IMR-90 (cell line): ENCODE measurements at regions of chr6 and their contacts with region 1.

Region 1: DNA sequence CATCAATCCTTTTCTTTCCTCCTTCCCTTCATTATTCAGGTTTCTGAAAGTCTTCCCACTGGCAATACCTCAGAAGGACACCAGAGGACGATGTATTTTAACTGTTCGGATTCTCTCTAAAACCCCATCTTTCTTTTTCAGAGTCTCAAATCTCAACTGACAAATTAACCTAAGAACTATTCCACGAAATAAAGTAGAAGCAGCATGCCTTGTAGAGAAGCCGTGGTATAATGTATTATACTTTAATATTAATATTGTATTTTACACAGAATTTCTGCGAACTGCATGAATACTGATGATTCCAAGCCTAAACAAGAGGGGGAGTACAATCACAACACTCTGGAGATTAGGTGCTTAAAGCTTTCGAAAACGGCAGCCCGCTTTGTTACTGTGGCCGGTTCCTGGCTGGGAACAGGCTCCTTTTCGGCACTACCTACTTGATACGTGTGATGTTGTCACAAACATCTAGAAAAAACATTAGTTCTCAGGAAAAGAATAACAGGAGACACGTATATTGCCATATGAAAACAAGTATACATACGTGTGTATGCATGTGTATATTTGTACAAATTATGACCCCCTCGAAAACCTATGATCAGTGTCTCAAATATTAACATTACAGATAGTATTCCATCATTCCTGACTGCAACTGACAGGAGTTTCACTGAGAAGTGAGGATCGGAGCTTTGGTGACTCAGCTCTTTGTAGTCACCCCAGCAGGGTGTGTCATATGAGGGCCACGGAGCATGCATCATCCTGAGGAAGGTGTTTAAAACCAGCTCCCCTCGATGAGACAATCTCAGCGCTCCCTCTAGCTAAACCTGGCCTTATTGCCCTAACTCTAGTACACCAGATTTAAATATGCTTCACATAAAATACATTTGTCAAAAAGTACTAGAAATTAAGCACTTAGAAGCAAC is 319.7 kb upstream of the TCF21 start:
- DNase-seq: peak; percentile 91
- ATAC-seq: peak; percentile 81
- H3K4me3 ChIP-seq: peak overlapping the region; percentile 29; the same call in 1 of the 2 replicates
- H3K27ac ChIP-seq: peak overlapping the region; percentile 96
- H3K4me1 ChIP-seq: peaks cover 16% of the 10 kb centered on the region
- H3K27me3 ChIP-seq: no peaks in the 10 kb centered on the region
- CTCF ChIP-seq: peak; percentile 97
- POLR2A ChIP-seq: peak; percentile 50; the same call in 1 of the 2 replicates
- RAD21 ChIP-seq: peak; percentile 96

Region 2: DNA sequence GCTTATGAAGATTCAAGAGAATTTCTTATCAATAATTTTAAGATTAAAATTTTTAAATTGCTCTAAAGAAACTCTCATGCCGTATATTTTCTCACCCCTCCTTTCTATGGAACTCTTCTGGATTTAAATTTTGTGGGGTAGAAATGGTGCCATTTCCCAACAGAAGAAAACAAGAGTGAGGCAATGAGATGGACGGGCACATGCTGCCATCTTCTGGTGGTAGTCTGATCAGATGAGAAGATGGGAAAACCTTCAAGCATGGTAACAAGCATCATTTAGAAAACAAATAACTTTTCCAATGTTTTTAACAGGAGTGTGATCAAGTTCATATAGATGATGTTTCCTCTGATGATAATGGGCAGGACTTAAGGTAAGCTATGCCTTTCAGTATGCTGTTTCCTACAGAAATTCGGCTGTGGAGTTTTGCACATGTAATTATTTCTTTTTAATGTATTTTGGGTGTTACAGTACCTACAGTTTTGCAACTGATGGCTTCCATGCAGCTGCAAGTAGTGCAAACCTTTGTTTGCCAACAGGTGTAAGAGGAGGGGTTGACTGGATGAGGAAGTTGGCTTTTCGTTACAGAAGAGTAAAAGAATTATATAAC is 56.7 kb before region 1 on chr6:
- CTCF ChIA-PET with region 1: no interaction called
- POLR2A ChIA-PET with region 1: no interaction called
- dilution Hi-C with region 1: no loop called
- in situ Hi-C with region 1: no loop called
- intact Hi-C with region 1: no loop called
- DNase-seq: peak; percentile 67
- ATAC-seq: peak; percentile 72
- H3K4me3 ChIP-seq: no peak overlapping the region
- H3K27ac ChIP-seq: no peak overlapping the region
- H3K4me1 ChIP-seq: no peaks in the 10 kb centered on the region
- H3K27me3 ChIP-seq: no peaks in the 10 kb centered on the region
- CTCF ChIP-seq: peak; percentile 81
- POLR2A ChIP-seq: peak; percentile 46; the same call in 1 of the 2 replicates
- RAD21 ChIP-seq: peak; percentile 92

Region 3: GRCh38 chr6:133587546-133588160 is 18.4 kb after region 1 on chr6:
- CTCF ChIA-PET with region 1: no interaction called
- POLR2A ChIA-PET with region 1: no interaction called
- dilution Hi-C with region 1: no loop called
- in situ Hi-C with region 1: no loop called
- intact Hi-C with region 1: no loop called
- DNase-seq: peak; percentile 87
- ATAC-seq: peak; percentile 87
- H3K4me3 ChIP-seq: no peak overlapping the region
- H3K27ac ChIP-seq: peak overlapping the region; percentile 99; the same call in 1 of the 2 replicates
- H3K4me1 ChIP-seq: peaks cover 15% of the 10 kb centered on the region
- H3K27me3 ChIP-seq: no peaks in the 10 kb centered on the region
- CTCF ChIP-seq: no peak
- POLR2A ChIP-seq: no peak
- RAD21 ChIP-seq: no peak

Region 4: DNA sequence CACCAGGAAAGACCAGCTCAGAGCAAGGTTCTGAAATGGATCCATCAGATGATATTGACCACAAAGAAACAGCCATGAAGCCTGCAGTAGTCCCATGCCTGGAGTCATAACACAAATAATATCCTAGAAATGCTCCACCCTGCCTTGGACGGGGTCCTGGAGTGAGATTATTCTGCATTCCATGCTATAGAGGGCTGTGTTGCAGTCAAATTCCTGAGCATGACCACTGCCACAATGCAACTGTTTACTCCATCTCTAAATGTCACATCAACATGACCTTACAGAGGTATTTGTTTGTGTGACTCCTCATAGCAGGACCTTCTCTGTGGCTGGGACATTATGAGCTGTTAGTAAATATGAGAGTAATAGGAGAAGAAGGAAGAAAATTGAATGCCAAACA is 62.2 kb after region 1 on chr6:
- CTCF ChIA-PET with region 1: interaction called, 4 read pairs
- POLR2A ChIA-PET with region 1: interaction called, 4 read pairs
- dilution Hi-C with region 1: no loop called
- in situ Hi-C with region 1: no loop called
- intact Hi-C with region 1: loop called (anchors 1 kb)
- DNase-seq: peak; percentile 73
- ATAC-seq: peak; percentile 87
- H3K4me3 ChIP-seq: no peak overlapping the region
- H3K27ac ChIP-seq: peak overlapping the region; percentile 69
- H3K4me1 ChIP-seq: peaks cover 20% of the 10 kb centered on the region
- H3K27me3 ChIP-seq: no peaks in the 10 kb centered on the region
- CTCF ChIP-seq: peak; percentile 46
- POLR2A ChIP-seq: no peak
- RAD21 ChIP-seq: 0 out of 2 replicates have a peak, but pooled peaks have one; percentile 15

Region 5: DNA sequence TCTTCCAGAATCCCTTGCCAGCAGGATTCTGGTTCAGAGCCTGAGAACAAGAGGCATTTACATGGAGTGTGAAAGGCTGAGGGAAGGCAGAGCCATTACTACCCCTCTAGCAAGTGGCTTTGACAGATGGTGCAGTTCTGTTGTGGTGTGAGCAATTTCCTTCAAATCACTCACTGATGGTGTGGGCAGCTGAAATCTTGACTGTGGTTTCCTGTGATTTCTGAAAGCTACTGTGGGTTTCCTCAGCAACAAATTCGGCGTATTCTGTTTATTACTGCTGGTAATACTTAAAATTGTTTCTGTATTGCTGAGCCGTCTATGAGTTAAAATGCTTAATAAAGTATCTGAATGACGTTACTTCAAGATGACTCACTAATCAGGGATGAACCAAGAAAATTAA is 138.2 kb after region 1 on chr6:
- CTCF ChIA-PET with region 1: no interaction called
- POLR2A ChIA-PET with region 1: interaction called, 3 read pairs
- dilution Hi-C with region 1: no loop called
- in situ Hi-C with region 1: no loop called
- intact Hi-C with region 1: loop called (anchors 2 kb)
- DNase-seq: peak; percentile 97
- ATAC-seq: peak; percentile 73
- H3K4me3 ChIP-seq: no peak overlapping the region
- H3K27ac ChIP-seq: peak overlapping the region; percentile 82
- H3K4me1 ChIP-seq: peaks cover 11% of the 10 kb centered on the region
- H3K27me3 ChIP-seq: no peaks in the 10 kb centered on the region
- CTCF ChIP-seq: no peak
- POLR2A ChIP-seq: no peak
- RAD21 ChIP-seq: peak; percentile 21; the same call in 1 of the 2 replicates

Region 6: DNA sequence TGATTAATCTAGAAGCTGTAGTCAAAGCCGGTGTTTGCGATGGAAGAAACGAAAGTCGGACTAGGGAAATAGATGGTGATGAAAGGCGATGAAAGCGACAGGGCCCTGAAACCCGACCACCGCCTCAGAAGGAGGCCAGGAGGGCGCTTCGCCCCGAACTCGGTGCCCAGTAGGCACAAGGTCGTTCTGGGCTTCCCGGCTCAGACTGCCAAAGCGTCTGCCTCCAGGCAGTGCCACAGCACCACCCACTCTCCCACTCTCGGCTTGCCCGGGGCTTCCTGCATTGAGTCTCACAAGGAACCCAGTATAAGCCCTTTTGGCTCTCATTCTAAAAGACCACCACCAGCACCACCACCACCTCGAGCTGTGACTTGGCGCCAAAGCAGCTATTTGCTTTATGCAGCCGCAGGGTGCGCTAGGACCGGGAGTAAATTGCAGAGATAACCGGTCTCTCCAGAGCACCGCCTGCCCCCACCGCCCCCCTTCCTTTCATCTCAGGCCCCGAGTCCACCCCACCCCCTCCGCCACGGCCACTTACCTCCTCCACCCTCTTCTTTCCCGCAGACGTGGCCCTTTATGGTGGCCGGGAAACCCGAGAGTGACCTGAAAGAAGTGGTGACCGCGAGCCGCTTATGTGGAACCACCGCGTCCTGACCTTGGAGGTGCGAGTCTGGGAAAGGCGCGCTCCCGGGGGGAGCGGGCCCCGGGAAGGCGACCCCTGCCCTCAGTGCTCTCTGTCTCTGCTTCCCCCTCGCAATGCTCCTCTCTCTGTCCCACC is 322.1 kb after region 1 on chr6:
- CTCF ChIA-PET with region 1: interaction called, 7 read pairs
- POLR2A ChIA-PET with region 1: interaction called, 3 read pairs
- dilution Hi-C with region 1: no loop called
- in situ Hi-C with region 1: no loop called
- intact Hi-C with region 1: loop called (anchors 1 kb)
- DNase-seq: peak; percentile 39
- ATAC-seq: no peak
- H3K4me3 ChIP-seq: peak overlapping the region; percentile 99
- H3K27ac ChIP-seq: peak overlapping the region; percentile 97
- H3K4me1 ChIP-seq: peaks cover 13% of the 10 kb centered on the region
- H3K27me3 ChIP-seq: no peaks in the 10 kb centered on the region
- CTCF ChIP-seq: no peak
- POLR2A ChIP-seq: no peak
- RAD21 ChIP-seq: no peak

Region 7: GRCh38 chr6:133973109-133973971 is 404.1 kb after region 1 on chr6:
- CTCF ChIA-PET with region 1: interaction called, 11 read pairs
- POLR2A ChIA-PET with region 1: no interaction called
- dilution Hi-C with region 1: no loop called
- in situ Hi-C with region 1: no loop called
- intact Hi-C with region 1: no loop called
- DNase-seq: peak; percentile 72
- ATAC-seq: peak; percentile 74
- H3K4me3 ChIP-seq: no peak overlapping the region
- H3K27ac ChIP-seq: no peak overlapping the region
- H3K4me1 ChIP-seq: peaks cover 2% of the 10 kb centered on the region; the same call in 1 of the 2 replicates
- H3K27me3 ChIP-seq: no peaks in the 10 kb centered on the region
- CTCF ChIP-seq: peak; percentile 80
- POLR2A ChIP-seq: no peak
- RAD21 ChIP-seq: peak; percentile 78

Region 8: DNA sequence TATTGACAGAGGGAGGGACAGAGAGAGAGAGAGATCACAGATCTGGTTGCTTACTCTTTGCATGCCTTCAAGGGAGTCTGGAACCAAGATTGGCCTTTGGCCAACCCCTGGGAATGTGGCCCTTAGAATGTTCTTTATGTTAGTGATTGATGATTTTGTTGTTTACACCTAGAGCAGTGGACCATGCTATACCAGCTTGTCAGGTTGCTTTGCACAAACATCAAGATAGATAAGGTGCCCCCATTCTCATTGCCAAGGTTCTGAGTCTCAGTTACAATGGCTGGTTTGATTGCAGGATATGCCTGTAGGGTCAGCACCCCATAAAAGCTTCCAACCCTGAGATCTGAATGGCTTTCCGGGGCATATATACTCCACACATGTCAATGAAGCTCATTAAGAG is 536.7 kb after region 1 on chr6:
- CTCF ChIA-PET with region 1: interaction called, 3 read pairs
- POLR2A ChIA-PET with region 1: no interaction called
- dilution Hi-C with region 1: no loop called
- in situ Hi-C with region 1: loop called (anchors 10 kb)
- intact Hi-C with region 1: no loop called
- DNase-seq: no peak
- ATAC-seq: no peak
- H3K4me3 ChIP-seq: no peak overlapping the region
- H3K27ac ChIP-seq: no peak overlapping the region
- H3K4me1 ChIP-seq: peaks cover 7% of the 10 kb centered on the region
- H3K27me3 ChIP-seq: no peaks in the 10 kb centered on the region
- CTCF ChIP-seq: no peak
- POLR2A ChIP-seq: no peak
- RAD21 ChIP-seq: no peak